Mammary epithelial cell (primary cell): ENCODE measurements at regions of chr9 and their contacts with region 1.

Region 1: GRCh38 chr9:4258321-4258720 is 41.5 kb downstream of the GLIS3 start:
- DNase-seq: peak; percentile 62
- H3K4me3 ChIP-seq: no peak overlapping the region
- H3K27ac ChIP-seq: peak overlapping the region; percentile 67
- H3K4me1 ChIP-seq: peaks cover 32% of the 10 kb centered on the region
- H3K27me3 ChIP-seq: no peaks in the 10 kb centered on the region
- CTCF ChIP-seq: no peak

Region 2: DNA sequence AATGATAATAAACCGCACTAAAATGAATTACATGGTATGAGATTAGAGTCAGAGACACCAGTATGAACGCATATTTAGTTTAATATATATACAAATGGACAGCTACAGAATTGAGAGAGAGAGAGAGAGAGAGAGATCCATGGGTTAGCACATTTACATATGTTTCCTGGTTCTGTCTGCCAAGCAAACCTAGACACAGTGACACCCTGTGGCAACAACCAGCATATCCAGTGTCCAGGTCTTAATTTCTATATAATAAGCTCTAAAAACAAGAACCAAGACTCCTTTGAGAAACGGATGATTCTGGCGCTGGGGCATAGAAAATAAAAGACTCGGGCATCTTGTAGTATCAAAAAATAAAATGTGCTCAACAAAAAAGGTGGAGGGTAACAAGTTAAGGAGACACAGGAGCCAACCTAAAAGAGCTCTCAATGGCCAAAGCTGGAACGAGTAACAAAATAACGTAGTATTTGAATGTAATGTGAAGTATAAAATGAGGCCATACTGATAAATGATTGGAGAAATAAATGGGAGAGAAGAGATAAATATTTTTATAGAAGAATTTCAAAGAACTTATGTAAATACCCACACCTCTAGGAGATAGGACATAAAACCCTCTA is 817.0 kb before region 1 on chr9:
- CTCF ChIA-PET with region 1: no interaction called
- dilution Hi-C with region 1: no loop called
- in situ Hi-C with region 1: no loop called
- intact Hi-C with region 1: no loop called
- DNase-seq: peak; percentile 45
- H3K4me3 ChIP-seq: no peak overlapping the region
- H3K27ac ChIP-seq: no peak overlapping the region
- H3K4me1 ChIP-seq: no peaks in the 10 kb centered on the region
- H3K27me3 ChIP-seq: no peaks in the 10 kb centered on the region
- CTCF ChIP-seq: peak; percentile 73 to 74

Region 3: GRCh38 chr9:3746296-3747275 is 511.7 kb before region 1 on chr9:
- CTCF ChIA-PET with region 1: no interaction called
- dilution Hi-C with region 1: no loop called
- in situ Hi-C with region 1: no loop called
- intact Hi-C with region 1: loop called (anchors 1 kb)
- DNase-seq: peak; percentile 93
- H3K4me3 ChIP-seq: no peak overlapping the region
- H3K27ac ChIP-seq: peak overlapping the region; percentile 71
- H3K4me1 ChIP-seq: peaks cover 34% of the 10 kb centered on the region
- H3K27me3 ChIP-seq: no peaks in the 10 kb centered on the region
- CTCF ChIP-seq: no peak

Region 4: GRCh38 chr9:4174781-4175180 is 83.5 kb before region 1 on chr9:
- CTCF ChIA-PET with region 1: no interaction called
- dilution Hi-C with region 1: loop called (anchors 5 kb)
- in situ Hi-C with region 1: no loop called
- intact Hi-C with region 1: no loop called
- DNase-seq: no peak
- H3K4me3 ChIP-seq: no peak overlapping the region
- H3K27ac ChIP-seq: no peak overlapping the region
- H3K4me1 ChIP-seq: no peaks in the 10 kb centered on the region
- H3K27me3 ChIP-seq: no peaks in the 10 kb centered on the region
- CTCF ChIP-seq: no peak